PC-3 (cell line): ENCODE measurements at regions of chr10 and their contacts with region 1.

Region 1: DNA sequence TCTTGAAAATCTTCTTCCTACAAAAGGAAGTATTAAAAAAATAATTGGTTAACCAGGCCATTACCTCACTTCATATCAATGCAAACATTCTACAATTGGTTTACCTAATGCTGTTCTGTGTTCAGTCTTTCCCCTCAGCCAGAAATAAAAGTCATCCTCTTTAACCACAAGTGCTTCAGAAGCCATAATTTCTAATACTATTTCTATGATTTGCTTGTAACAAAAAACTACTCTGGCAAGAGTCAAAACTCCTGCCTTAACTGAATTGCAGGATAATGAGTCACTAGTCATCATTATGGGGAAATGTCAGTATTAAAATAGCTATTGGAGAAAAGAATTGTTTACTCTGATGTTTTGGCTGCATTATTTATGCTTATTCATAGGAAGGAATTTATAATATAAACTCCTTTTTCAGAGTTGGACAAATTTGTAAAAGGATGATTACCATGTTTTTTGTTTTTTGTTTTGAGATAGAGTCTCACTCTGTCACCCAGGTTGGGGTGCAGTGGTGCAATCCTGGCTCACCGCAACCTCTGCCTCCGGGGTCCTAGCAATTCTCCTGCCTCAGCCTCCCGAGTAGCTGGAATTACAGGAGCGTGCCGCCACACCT is 55.5 kb upstream of the ODAD2 start:
- DNase-seq: peak; percentile 90
- ATAC-seq: peak; percentile 88
- H3K4me3 ChIP-seq: 0 out of 2 replicates have a peak overlapping the region, but pooled peaks have one; percentile 29
- H3K27ac ChIP-seq: peak overlapping the region; percentile 89
- H3K4me1 ChIP-seq: peaks cover 27% of the 10 kb centered on the region
- H3K27me3 ChIP-seq: no peaks in the 10 kb centered on the region
- CTCF ChIP-seq: no peak

Region 2: GRCh38 chr10:27998254-27999004 is 55.9 kb before region 1 on chr10:
- CTCF ChIA-PET with region 1: no interaction called
- POLR2A ChIA-PET with region 1: no interaction called
- intact Hi-C with region 1: loop called (anchors 1 kb)
- DNase-seq: peak; percentile 27
- ATAC-seq: peak; percentile 84
- H3K4me3 ChIP-seq: peak overlapping the region; percentile 90
- H3K27ac ChIP-seq: peak overlapping the region; percentile 18; the same call in 1 of the 2 replicates
- H3K4me1 ChIP-seq: peaks cover 7% of the 10 kb centered on the region; the same call in 1 of the 2 replicates
- H3K27me3 ChIP-seq: no peaks in the 10 kb centered on the region
- CTCF ChIP-seq: no peak

Region 3: GRCh38 chr10:28089467-28089866 is 35.1 kb after region 1 on chr10:
- CTCF ChIA-PET with region 1: no interaction called
- POLR2A ChIA-PET with region 1: interaction called, 3 read pairs
- intact Hi-C with region 1: loop called (anchors 1 kb)
- DNase-seq: peak; percentile 81
- ATAC-seq: peak; percentile 88
- H3K4me3 ChIP-seq: peak overlapping the region; percentile 32; the same call in 1 of the 2 replicates
- H3K27ac ChIP-seq: peak overlapping the region; percentile 80
- H3K4me1 ChIP-seq: peaks cover 20% of the 10 kb centered on the region
- H3K27me3 ChIP-seq: no peaks in the 10 kb centered on the region
- CTCF ChIP-seq: no peak

Region 4: GRCh38 chr10:28202941-28203352 is 148.6 kb after region 1 on chr10:
- CTCF ChIA-PET with region 1: no interaction called
- POLR2A ChIA-PET with region 1: no interaction called
- intact Hi-C with region 1: loop called (anchors 1 kb)
- DNase-seq: peak; percentile 4
- ATAC-seq: no peak
- H3K4me3 ChIP-seq: no peak overlapping the region
- H3K27ac ChIP-seq: peak overlapping the region; percentile 99
- H3K4me1 ChIP-seq: peaks cover 39% of the 10 kb centered on the region
- H3K27me3 ChIP-seq: no peaks in the 10 kb centered on the region
- CTCF ChIP-seq: no peak